CD14-positive monocyte (primary cell): ENCODE measurements at regions of chr5 and their contacts with region 1.

Region 1: GRCh38 chr5:66757188-66757833 is 161.1 kb downstream of the MAST4 start:
- DNase-seq: peak in 2 of 3 donors; percentile 19 to 44
- H3K4me3 ChIP-seq: no peak overlapping the region
- H3K4me3 Mint-ChIP-seq: no peak overlapping the region
- H3K27ac ChIP-seq: no peak overlapping the region
- H3K27ac Mint-ChIP-seq: no peak overlapping the region
- H3K4me1 ChIP-seq: peaks cover 4% of the 10 kb centered on the region in 2 donors
- H3K4me1 Mint-ChIP-seq: peaks cover 5% of the 10 kb centered on the region
- H3K27me3 ChIP-seq: no peaks in the 10 kb centered on the region
- H3K27me3 Mint-ChIP-seq: peaks cover 9 to 23% (median 11%) of the 10 kb centered on the region in 3 donors
- CTCF ChIP-seq: peak; percentile 56

Region 2: DNA sequence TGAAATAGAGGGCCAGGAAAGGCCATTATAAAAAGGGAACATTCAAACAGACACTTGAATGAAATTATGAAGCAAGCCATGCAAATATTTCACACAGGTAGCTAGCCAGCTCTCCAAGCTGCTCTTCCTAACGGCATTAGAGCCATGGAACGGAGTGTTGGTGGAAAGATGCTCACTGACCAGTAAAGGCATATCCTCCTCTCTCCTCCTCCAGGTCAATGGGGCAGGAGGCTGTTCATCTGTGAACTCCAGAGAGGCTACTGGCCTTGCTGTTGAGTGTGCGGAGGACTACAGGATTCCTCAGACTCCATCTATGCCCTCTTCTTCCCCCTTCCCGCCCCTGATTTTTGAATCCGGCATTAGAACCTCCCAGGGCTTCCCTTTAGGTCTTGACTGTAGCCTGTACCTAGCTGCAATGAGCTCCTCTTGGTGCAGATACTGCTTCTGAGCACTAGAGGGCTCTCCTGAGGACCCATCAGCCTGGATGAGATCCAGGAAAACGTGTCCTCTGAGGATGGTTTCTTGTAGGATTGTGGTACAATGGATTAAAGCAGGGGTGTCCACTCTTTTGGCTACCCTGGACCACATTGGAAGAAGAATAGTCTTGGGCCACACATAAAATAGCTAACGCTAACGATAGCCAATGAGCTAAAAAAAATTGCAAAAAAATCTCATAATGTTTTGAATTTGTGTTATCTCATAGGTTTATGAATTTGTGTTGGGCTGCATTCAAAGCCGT is 451.0 kb before region 1 on chr5:
- intact Hi-C with region 1: loop called (anchors 5 kb)
- DNase-seq: peak; percentile 29 to 61 (median 57)
- H3K4me3 ChIP-seq: no peak overlapping the region
- H3K4me3 Mint-ChIP-seq: no peak overlapping the region
- H3K27ac ChIP-seq: no peak overlapping the region
- H3K27ac Mint-ChIP-seq: no peak overlapping the region
- H3K4me1 ChIP-seq: no peaks in the 10 kb centered on the region
- H3K4me1 Mint-ChIP-seq: no peaks in the 10 kb centered on the region
- H3K27me3 ChIP-seq: no peaks in the 10 kb centered on the region
- H3K27me3 Mint-ChIP-seq: peaks cover 5 to 13% (median 8%) of the 10 kb centered on the region in 3 donors
- CTCF ChIP-seq: peak; percentile 95